ENCODE measurements at regions of chr6 and their contacts with region 1.

Region 1: GRCh38 chr6:42030585-42031506 is 19.5 kb upstream of the TAF8 start:
- DNase-seq: no peak
- ATAC-seq: 0 out of 2 replicates have a peak, but pooled peaks have one; percentile 22
- H3K4me3 ChIP-seq: no peak overlapping the region
- H3K27ac ChIP-seq: no peak overlapping the region
- H3K4me1 ChIP-seq: no peaks in the 10 kb centered on the region
- H3K27me3 ChIP-seq: no peaks in the 10 kb centered on the region
- CTCF ChIP-seq: no peak

Region 2: GRCh38 chr6:41801380-41801779 is 229.5 kb before region 1 on chr6:
- CTCF ChIA-PET with region 1: no interaction called
- POLR2A ChIA-PET with region 1: no interaction called
- in situ Hi-C with region 1: no loop called
- intact Hi-C with region 1: loop called (anchors 5 kb)
- DNase-seq: no peak
- ATAC-seq: peak; percentile 73; the same call in 1 of the 2 replicates
- H3K4me3 ChIP-seq: no peak overlapping the region
- H3K27ac ChIP-seq: no peak overlapping the region
- H3K4me1 ChIP-seq: no peaks in the 10 kb centered on the region
- H3K27me3 ChIP-seq: no peaks in the 10 kb centered on the region
- CTCF ChIP-seq: no peak; the same call in 1 of the 2 replicates